Panc1 (cell line): ENCODE measurements at regions of chr2 and their contacts with region 1.

Region 1: DNA sequence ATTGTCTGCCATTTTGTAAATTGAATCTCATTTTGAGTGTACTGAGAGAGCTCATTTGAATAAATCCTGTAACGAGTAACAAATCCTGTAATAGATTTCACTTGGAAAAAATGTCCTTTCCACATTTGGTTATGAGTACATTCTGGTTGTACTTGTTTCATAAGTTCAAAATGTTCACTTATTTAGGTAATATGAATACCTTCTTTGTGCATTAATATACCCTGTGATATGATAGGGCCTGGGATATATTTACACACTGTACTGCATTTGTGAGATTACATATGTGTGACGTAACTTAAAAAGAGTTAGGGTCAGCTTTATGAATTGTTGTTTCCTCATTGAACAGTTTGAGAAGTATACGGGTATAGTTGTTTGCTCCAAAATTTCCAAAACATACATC is 16.1 kb downstream of the AGFG1 start:
- DNase-seq: no peak
- ATAC-seq: no peak
- H3K4me3 ChIP-seq: no peak overlapping the region
- H3K27ac ChIP-seq: no peak overlapping the region
- H3K4me1 ChIP-seq: no peaks in the 10 kb centered on the region
- H3K27me3 ChIP-seq: no peaks in the 10 kb centered on the region
- CTCF ChIP-seq: no peak

Region 2: GRCh38 chr2:227423656-227424499 is 64.2 kb before region 1 on chr2:
- CTCF ChIA-PET with region 1: no interaction called
- POLR2A ChIA-PET with region 1: no interaction called
- in situ Hi-C with region 1: no loop called
- intact Hi-C with region 1: no loop called
- DNase-seq: no peak
- ATAC-seq: no peak
- H3K4me3 ChIP-seq: no peak overlapping the region
- H3K27ac ChIP-seq: no peak overlapping the region
- H3K4me1 ChIP-seq: no peaks in the 10 kb centered on the region
- H3K27me3 ChIP-seq: no peaks in the 10 kb centered on the region
- CTCF ChIP-seq: no peak

Region 3: GRCh38 chr2:227503433-227504406 is 15.7 kb after region 1 on chr2:
- CTCF ChIA-PET with region 1: no interaction called
- POLR2A ChIA-PET with region 1: interaction called, 12 read pairs
- in situ Hi-C with region 1: no loop called
- intact Hi-C with region 1: no loop called
- DNase-seq: peak; percentile 39
- ATAC-seq: peak; percentile 90
- H3K4me3 ChIP-seq: no peak overlapping the region
- H3K27ac ChIP-seq: 0 out of 2 replicates have a peak overlapping the region, but pooled peaks have one; percentile 18
- H3K4me1 ChIP-seq: peaks cover 16% of the 10 kb centered on the region
- H3K27me3 ChIP-seq: no peaks in the 10 kb centered on the region
- CTCF ChIP-seq: no peak